AG04450 (cell line): ENCODE measurements at regions of chr10 and their contacts with region 1.

Region 1: GRCh38 chr10:60646966-60647796 is 131.1 kb upstream of the CDK1 start:
- DNase-seq: peak; percentile 38
- H3K4me3 ChIP-seq: no peak overlapping the region
- H3K27ac ChIP-seq: no peak overlapping the region
- H3K27me3 ChIP-seq: no peaks in the 10 kb centered on the region
- CTCF ChIP-seq: peak; percentile 69

Region 2: DNA sequence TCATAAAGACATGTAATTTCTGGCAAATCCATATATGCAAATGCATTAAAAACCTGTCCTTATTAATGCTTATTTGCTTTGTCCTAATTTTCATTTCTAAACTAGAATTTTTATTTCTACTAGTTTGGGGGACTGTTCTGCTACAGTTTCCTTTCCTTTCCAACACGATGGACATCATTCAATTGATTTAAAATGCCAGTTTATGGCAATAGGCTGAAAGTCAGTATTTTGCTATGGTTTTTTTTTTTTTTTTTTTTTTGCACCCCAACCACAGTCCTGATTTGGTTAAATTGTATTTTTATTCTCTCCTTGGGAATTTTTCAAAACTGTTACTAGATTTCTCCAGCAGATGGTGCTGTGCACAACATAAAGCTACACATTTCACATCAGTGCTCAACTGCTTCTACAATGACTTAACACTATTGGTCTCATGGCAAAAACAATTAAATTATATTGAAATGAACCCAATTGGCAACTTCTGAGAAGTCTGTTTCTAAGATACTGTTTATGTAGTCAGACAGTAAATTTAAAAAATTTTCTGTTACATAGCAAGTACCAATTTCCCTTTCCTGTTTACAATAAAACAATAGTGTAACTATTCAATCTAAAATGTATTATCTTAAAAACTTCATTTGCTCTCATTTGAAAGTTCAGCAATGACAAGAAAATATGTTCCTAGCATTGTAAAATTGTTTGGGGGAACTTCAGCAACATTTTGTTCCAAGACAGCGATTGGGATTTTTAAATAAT is 547.0 kb before region 1 on chr10:
- CTCF ChIA-PET with region 1: interaction called, 10 read pairs
- POLR2A ChIA-PET with region 1: no interaction called
- DNase-seq: peak; percentile 16
- H3K4me3 ChIP-seq: no peak overlapping the region
- H3K27ac ChIP-seq: no peak overlapping the region
- H3K27me3 ChIP-seq: peaks cover 2% of the 10 kb centered on the region
- CTCF ChIP-seq: peak; percentile 64

Region 3: GRCh38 chr10:60629332-60629731 is 17.8 kb before region 1 on chr10:
- CTCF ChIA-PET with region 1: interaction called, 21 read pairs
- POLR2A ChIA-PET with region 1: no interaction called
- DNase-seq: no peak
- H3K4me3 ChIP-seq: no peak overlapping the region
- H3K27ac ChIP-seq: no peak overlapping the region
- H3K27me3 ChIP-seq: no peaks in the 10 kb centered on the region
- CTCF ChIP-seq: no peak

Region 4: GRCh38 chr10:60662917-60663614 is 15.9 kb after region 1 on chr10:
- CTCF ChIA-PET with region 1: interaction called, 16 read pairs
- POLR2A ChIA-PET with region 1: no interaction called
- DNase-seq: no peak
- H3K4me3 ChIP-seq: no peak overlapping the region
- H3K27ac ChIP-seq: no peak overlapping the region
- H3K27me3 ChIP-seq: no peaks in the 10 kb centered on the region
- CTCF ChIP-seq: no peak